Caco-2 (cell line): ENCODE measurements at regions of chr12 and their contacts with region 1.

Region 1: GRCh38 chr12:19757317-19757877 is 318.1 kb downstream of the AEBP2 start:
- DNase-seq: peak in 1 of 2 experiments; percentile 23
- H3K4me3 ChIP-seq: no peak overlapping the region
- H3K4me3 Mint-ChIP-seq: no peak overlapping the region
- H3K27ac Mint-ChIP-seq: no peak overlapping the region
- H3K4me1 ChIP-seq: no peaks in the 10 kb centered on the region
- H3K4me1 Mint-ChIP-seq: no peaks in the 10 kb centered on the region
- H3K27me3 ChIP-seq: no peaks in the 10 kb centered on the region
- H3K27me3 Mint-ChIP-seq: no peaks in the 10 kb centered on the region
- CTCF ChIP-seq: peak; percentile 78 to 80

Region 2: DNA sequence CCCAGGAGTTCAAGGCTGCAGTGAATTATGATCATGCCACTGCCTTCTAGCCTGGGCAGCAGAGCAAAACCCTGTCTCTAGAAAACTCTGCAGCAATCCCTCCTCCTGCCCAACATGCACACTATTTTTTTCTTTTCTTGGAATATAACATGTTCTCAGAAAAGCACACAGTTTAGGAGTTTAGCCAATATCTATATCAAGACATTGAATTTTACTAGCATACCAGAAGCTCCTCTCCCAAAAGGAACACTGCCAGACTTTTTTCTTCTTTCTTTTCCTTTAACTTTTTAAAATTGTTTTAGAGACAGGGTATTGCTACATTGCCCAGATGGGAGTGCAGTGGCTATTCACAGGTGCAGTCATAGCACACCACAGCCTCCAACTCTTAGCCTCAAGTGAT is 425.2 kb before region 1 on chr12:
- CTCF ChIA-PET with region 1: no interaction called
- POLR2A ChIA-PET with region 1: no interaction called
- intact Hi-C with region 1: no loop called
- DNase-seq: no peak
- H3K4me3 ChIP-seq: no peak overlapping the region
- H3K4me3 Mint-ChIP-seq: no peak overlapping the region
- H3K27ac Mint-ChIP-seq: no peak overlapping the region
- H3K4me1 ChIP-seq: no peaks in the 10 kb centered on the region
- H3K4me1 Mint-ChIP-seq: no peaks in the 10 kb centered on the region
- H3K27me3 ChIP-seq: no peaks in the 10 kb centered on the region
- H3K27me3 Mint-ChIP-seq: no peaks in the 10 kb centered on the region
- CTCF ChIP-seq: no peak

Region 3: GRCh38 chr12:19704966-19705365 is 52.4 kb before region 1 on chr12:
- CTCF ChIA-PET with region 1: no interaction called
- POLR2A ChIA-PET with region 1: no interaction called
- intact Hi-C with region 1: no loop called
- DNase-seq: no peak
- H3K4me3 ChIP-seq: no peak overlapping the region
- H3K4me3 Mint-ChIP-seq: no peak overlapping the region
- H3K27ac Mint-ChIP-seq: no peak overlapping the region
- H3K4me1 ChIP-seq: no peaks in the 10 kb centered on the region
- H3K4me1 Mint-ChIP-seq: no peaks in the 10 kb centered on the region
- H3K27me3 ChIP-seq: no peaks in the 10 kb centered on the region
- H3K27me3 Mint-ChIP-seq: no peaks in the 10 kb centered on the region
- CTCF ChIP-seq: no peak

Region 4: DNA sequence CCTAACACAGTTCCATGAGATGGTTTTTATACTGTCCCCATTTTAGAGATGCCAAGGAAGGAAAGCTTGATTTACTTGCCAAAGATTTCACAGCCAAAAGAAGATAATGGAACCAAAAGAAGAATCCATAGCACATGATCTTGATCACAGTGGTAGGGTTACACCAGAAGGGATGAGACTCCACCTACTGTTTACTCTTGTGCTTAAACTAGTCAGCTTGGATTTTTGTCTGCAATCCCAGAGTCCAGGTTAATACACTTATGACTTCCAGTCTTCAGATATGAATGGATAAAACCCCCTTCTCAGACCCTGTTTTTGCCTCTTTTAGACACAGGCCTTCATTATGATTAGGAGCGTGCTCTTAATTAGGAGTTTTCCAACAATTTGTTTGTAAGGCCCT is 136.1 kb after region 1 on chr12:
- CTCF ChIA-PET with region 1: interaction called, 3 read pairs
- POLR2A ChIA-PET with region 1: no interaction called
- intact Hi-C with region 1: loop called (anchors 1 kb)
- DNase-seq: peak in 1 of 2 experiments; percentile 17
- H3K4me3 ChIP-seq: no peak overlapping the region
- H3K4me3 Mint-ChIP-seq: no peak overlapping the region
- H3K27ac Mint-ChIP-seq: no peak overlapping the region
- H3K4me1 ChIP-seq: no peaks in the 10 kb centered on the region
- H3K4me1 Mint-ChIP-seq: no peaks in the 10 kb centered on the region
- H3K27me3 ChIP-seq: no peaks in the 10 kb centered on the region
- H3K27me3 Mint-ChIP-seq: no peaks in the 10 kb centered on the region
- CTCF ChIP-seq: peak; percentile 21 to 31